CD4-positive, alpha-beta T cell (primary cell): ENCODE measurements at regions of chr9 and their contacts with region 1.

Region 1: GRCh38 chr9:121121582-121122087 is 46.9 kb downstream of the CNTRL start:
- DNase-seq: peak; percentile 91 to 98 (median 96)
- ATAC-seq: peak; percentile 95
- H3K4me3 ChIP-seq: peak overlapping the region; percentile 59
- H3K4me3 Mint-ChIP-seq: peak overlapping the region; percentile 83
- H3K27ac ChIP-seq: peak overlapping the region; percentile 49 to 72
- H3K27ac Mint-ChIP-seq: peak overlapping the region; percentile 88
- H3K4me1 ChIP-seq: peaks cover 22% of the 10 kb centered on the region
- H3K4me1 Mint-ChIP-seq: peaks cover 54% of the 10 kb centered on the region
- H3K27me3 ChIP-seq: no peaks in the 10 kb centered on the region
- H3K27me3 Mint-ChIP-seq: no peaks in the 10 kb centered on the region
- CTCF ChIP-seq: no peak

Region 2: DNA sequence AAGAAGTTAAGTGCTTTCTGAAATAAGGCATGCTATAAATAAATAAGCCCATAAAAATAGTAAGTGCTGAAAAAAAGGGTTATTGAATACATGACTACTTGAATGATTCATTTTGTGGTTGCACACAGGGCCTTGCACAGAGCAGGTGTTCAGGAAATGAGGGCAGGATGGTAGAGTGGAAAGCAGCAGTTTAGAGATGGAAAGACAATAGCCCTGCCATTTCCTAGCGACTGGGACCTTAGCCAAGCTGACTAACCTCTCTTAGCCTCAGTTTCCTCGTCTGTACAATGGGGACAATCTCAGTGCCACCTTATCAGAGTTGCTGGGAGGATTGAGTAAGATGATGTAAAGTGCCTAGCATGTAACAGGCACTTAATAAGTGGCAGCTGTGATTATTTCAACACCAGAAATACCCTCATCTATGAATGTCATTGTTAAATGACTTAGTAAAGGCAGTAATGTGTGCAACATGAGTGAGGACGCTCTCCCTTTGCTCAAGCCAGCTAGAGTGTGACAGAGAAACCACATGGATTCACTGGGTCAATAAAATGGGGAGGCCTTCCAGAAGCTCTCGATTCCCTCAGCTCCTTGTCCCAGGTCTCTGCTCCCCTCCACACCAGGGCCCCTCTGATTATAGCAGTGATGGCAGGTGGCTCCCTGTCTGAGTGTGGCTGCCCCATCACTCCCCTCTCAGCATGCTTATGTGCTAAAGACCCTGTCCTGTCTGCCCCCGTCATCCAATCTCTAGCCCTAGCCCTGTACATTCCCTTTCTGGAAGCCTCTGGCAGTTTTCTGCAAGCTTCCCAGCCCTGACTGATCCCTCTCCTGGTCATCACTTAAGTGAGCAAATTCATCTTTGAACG is 228.7 kb before region 1 on chr9:
- CTCF ChIA-PET with region 1: no interaction called
- POLR2A ChIA-PET with region 1: interaction called, 12 read pairs
- intact Hi-C with region 1: no loop called
- DNase-seq: peak in 13 of 14 experiments; percentile 50 to 89 (median 59)
- ATAC-seq: peak; percentile 55
- H3K4me3 ChIP-seq: no peak overlapping the region
- H3K4me3 Mint-ChIP-seq: peak overlapping the region; percentile 28
- H3K27ac ChIP-seq: peak overlapping the region; percentile 86 to 88
- H3K27ac Mint-ChIP-seq: peak overlapping the region; percentile 98
- H3K4me1 ChIP-seq: peaks cover 96% of the 10 kb centered on the region
- H3K4me1 Mint-ChIP-seq: peaks cover 77% of the 10 kb centered on the region
- H3K27me3 ChIP-seq: no peaks in the 10 kb centered on the region
- H3K27me3 Mint-ChIP-seq: no peaks in the 10 kb centered on the region
- CTCF ChIP-seq: no peak

Region 3: GRCh38 chr9:120985810-120986222 is 135.8 kb before region 1 on chr9:
- CTCF ChIA-PET with region 1: no interaction called
- POLR2A ChIA-PET with region 1: interaction called, 4 read pairs
- intact Hi-C with region 1: loop called in 1 of 2 experiments (anchors 5 kb)
- DNase-seq: peak in 1 of 14 experiments; percentile 4
- ATAC-seq: no peak
- H3K4me3 ChIP-seq: no peak overlapping the region
- H3K4me3 Mint-ChIP-seq: no peak overlapping the region
- H3K27ac ChIP-seq: no peak overlapping the region
- H3K27ac Mint-ChIP-seq: no peak overlapping the region
- H3K4me1 ChIP-seq: no peaks in the 10 kb centered on the region
- H3K4me1 Mint-ChIP-seq: peaks cover 5% of the 10 kb centered on the region
- H3K27me3 ChIP-seq: no peaks in the 10 kb centered on the region
- H3K27me3 Mint-ChIP-seq: no peaks in the 10 kb centered on the region
- CTCF ChIP-seq: no peak

Region 4: GRCh38 chr9:121107041-121107440 is 14.6 kb before region 1 on chr9:
- CTCF ChIA-PET with region 1: interaction called, 14 read pairs
- POLR2A ChIA-PET with region 1: interaction called, 12 read pairs
- intact Hi-C with region 1: no loop called
- DNase-seq: peak in 3 of 14 experiments; percentile 56 to 60 (median 56)
- ATAC-seq: peak; percentile 100
- H3K4me3 ChIP-seq: no peak overlapping the region
- H3K4me3 Mint-ChIP-seq: no peak overlapping the region
- H3K27ac ChIP-seq: no peak overlapping the region
- H3K27ac Mint-ChIP-seq: peak overlapping the region; percentile 64
- H3K4me1 ChIP-seq: no peaks in the 10 kb centered on the region
- H3K4me1 Mint-ChIP-seq: peaks cover 27% of the 10 kb centered on the region
- H3K27me3 ChIP-seq: no peaks in the 10 kb centered on the region
- H3K27me3 Mint-ChIP-seq: no peaks in the 10 kb centered on the region
- CTCF ChIP-seq: peak; percentile 59

Region 5: DNA sequence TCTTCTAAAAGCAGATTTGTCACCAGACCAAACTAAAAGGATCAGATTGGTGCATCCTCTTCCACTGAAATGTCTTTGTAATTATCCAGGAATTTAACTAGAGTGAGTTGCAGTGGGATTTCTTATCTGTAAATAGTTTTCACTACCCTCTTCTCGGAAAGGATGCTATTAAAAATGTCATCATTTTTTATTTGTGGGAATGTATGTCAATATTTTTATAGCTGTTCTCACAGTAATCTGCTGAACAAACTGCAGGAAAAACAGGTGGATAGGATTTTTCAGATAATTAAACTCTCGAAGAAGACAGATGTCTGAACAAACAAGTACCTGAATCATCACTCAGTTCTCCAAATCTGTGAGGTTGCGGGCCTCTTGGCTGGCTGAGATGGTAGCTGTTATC is 17.3 kb after region 1 on chr9:
- CTCF ChIA-PET with region 1: interaction called, 6 read pairs
- POLR2A ChIA-PET with region 1: interaction called, 119 read pairs
- intact Hi-C with region 1: no loop called
- DNase-seq: no peak
- ATAC-seq: no peak
- H3K4me3 ChIP-seq: no peak overlapping the region
- H3K4me3 Mint-ChIP-seq: no peak overlapping the region
- H3K27ac ChIP-seq: no peak overlapping the region
- H3K27ac Mint-ChIP-seq: peak overlapping the region; percentile 59
- H3K4me1 ChIP-seq: peaks cover 2% of the 10 kb centered on the region
- H3K4me1 Mint-ChIP-seq: peaks cover 43% of the 10 kb centered on the region
- H3K27me3 ChIP-seq: no peaks in the 10 kb centered on the region
- H3K27me3 Mint-ChIP-seq: no peaks in the 10 kb centered on the region
- CTCF ChIP-seq: no peak

Region 6: DNA sequence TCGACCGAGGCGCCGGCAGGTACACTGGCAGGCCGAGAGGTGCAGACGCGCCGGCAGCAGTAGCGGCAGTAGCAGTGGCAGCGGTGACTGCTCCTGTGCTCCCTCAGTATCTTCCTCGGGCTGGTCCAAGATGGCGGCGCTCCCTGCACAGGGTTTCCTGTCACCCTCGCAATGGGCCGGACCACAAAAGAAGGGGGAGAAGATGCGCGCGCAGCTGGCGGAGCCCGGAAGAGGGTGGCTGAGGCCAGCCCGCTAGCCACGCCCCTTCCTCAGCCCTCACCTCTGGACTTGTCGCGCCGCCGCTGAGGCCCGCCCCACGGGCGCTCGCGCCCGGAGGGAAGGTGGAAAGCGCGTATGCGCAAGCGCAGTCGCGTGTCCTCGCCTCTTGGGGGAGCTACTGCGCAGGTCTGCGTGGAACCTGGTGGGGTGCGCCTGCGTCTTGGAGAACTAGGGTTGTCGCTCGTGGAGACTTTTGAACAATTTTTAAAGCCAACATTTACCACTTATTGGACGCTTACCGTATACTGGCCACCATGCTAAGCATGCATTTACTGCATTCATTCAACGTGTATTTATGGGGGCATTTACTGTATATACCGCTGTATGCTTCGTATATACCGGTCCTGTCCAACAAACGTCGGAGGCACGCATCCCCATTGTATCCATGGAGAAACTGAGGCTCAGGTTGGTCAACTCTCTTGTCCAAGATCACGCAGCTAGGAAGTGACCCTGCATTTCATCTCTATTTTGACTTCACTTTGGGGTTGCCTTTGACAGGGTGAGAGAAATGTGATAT is 80.3 kb after region 1 on chr9 and contains the start of gene RAB14:
- CTCF ChIA-PET with region 1: interaction called, 7 read pairs
- POLR2A ChIA-PET with region 1: interaction called, 40 read pairs
- intact Hi-C with region 1: loop called (anchors 5 kb)
- DNase-seq: peak; percentile 100
- ATAC-seq: peak; percentile 89
- H3K4me3 ChIP-seq: peak within 1 kb of the TSS; percentile 75
- H3K4me3 Mint-ChIP-seq: peak within 1 kb of the TSS; percentile 96
- H3K27ac ChIP-seq: peak within 1 kb of the TSS; percentile 76 to 87
- H3K27ac Mint-ChIP-seq: peak within 1 kb of the TSS; percentile 91
- H3K4me1 ChIP-seq: peaks cover 11% of the 10 kb centered on the region
- H3K4me1 Mint-ChIP-seq: peaks cover 49% of the 10 kb centered on the region
- H3K27me3 ChIP-seq: no peaks in the 10 kb centered on the region
- H3K27me3 Mint-ChIP-seq: no peaks in the 10 kb centered on the region
- CTCF ChIP-seq: peak; percentile 62
- total RNA-seq, gene RAB14: 57.4 to 58.2 TPM

Region 7: DNA sequence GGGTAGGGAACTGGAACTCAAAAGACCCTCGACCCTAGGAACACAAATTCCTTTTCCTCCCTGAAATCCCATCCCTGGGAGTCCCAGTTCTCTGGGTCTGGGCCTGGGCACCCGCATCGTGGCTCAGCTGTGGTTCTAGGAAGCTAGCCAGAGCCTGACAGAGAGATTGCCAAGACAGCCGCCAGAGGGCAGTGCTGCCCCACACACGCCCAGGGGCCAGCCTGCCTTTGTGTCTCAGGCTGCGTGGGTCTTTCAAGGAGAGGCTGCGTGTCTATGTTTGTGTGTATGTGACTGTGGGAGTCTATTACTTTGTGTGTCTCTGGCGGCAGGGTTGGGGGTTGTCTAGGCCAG is 1003.5 kb after region 1 on chr9:
- CTCF ChIA-PET with region 1: no interaction called
- POLR2A ChIA-PET with region 1: no interaction called
- intact Hi-C with region 1: no loop called
- DNase-seq: peak; percentile 55 to 86 (median 74)
- ATAC-seq: peak; percentile 79
- H3K4me3 ChIP-seq: no peak overlapping the region
- H3K4me3 Mint-ChIP-seq: peak overlapping the region; percentile 65
- H3K27ac ChIP-seq: no peak overlapping the region
- H3K27ac Mint-ChIP-seq: no peak overlapping the region
- H3K4me1 ChIP-seq: peaks cover 36% of the 10 kb centered on the region
- H3K4me1 Mint-ChIP-seq: peaks cover 21% of the 10 kb centered on the region
- H3K27me3 ChIP-seq: peaks cover 18 to 27% of the 10 kb centered on the region in 2 experiments
- H3K27me3 Mint-ChIP-seq: peaks cover 52% of the 10 kb centered on the region
- CTCF ChIP-seq: peak; percentile 91